ENCODE measurements at regions of chr10 and their contacts with region 1.

Region 1: DNA sequence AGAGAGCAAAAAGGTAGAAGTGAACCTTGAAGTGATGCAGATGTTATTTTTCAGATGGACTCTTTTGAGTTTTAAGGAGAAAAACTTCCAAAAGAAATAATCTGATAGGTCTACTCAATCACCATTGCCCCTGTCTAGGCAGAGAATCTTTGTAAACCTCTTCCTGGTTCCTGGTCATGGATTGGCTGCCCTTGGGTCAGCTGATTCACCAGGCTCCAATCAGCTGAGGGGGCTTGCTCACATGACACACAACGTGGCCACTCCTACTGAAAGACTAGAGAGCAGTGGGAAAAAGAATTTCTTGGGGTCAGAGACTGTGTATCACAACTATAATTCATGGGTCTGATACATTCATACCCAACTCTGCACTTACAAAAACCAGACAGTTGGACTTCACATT is 20.0 kb upstream of the JCAD start:
- DNase-seq: no peak
- H3K4me3 ChIP-seq: no peak overlapping the region
- H3K27ac ChIP-seq: no peak overlapping the region
- H3K4me1 ChIP-seq: no peaks in the 10 kb centered on the region
- H3K27me3 ChIP-seq: peaks cover under 1% of the 10 kb centered on the region
- CTCF ChIP-seq: no peak

Region 2: DNA sequence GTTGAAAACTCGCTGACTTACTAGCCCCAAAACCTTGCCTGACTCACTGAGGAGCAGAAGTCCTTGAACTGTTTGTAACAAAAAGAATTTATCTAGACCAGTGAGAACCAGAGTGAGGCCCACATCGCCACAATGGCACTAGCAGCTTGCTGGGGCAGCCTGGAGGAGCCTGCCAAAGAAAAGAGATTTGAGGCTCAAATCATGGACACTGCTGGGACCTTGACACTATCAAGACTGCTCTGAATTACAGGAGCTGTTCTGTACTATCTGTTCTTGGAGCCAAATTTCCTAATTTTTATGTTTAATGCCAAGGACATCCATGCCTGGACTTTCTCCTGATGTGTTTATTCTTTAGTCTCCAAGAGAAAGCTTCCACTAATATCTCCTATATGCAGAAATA is 62.0 kb after region 1 on chr10:
- CTCF ChIA-PET with region 1: no interaction called
- dilution Hi-C with region 1: loop called (anchors 5 kb)
- in situ Hi-C with region 1: no loop called
- intact Hi-C with region 1: no loop called
- DNase-seq: no peak
- H3K4me3 ChIP-seq: no peak overlapping the region
- H3K27ac ChIP-seq: no peak overlapping the region
- H3K4me1 ChIP-seq: no peaks in the 10 kb centered on the region
- H3K27me3 ChIP-seq: no peaks in the 10 kb centered on the region
- CTCF ChIP-seq: no peak

Region 3: GRCh38 chr10:30231071-30231652 is 151.8 kb after region 1 on chr10:
- CTCF ChIA-PET with region 1: no interaction called
- dilution Hi-C with region 1: no loop called
- in situ Hi-C with region 1: no loop called
- intact Hi-C with region 1: no loop called
- DNase-seq: no peak
- H3K4me3 ChIP-seq: no peak overlapping the region
- H3K27ac ChIP-seq: no peak overlapping the region
- H3K4me1 ChIP-seq: peaks cover 6% of the 10 kb centered on the region
- H3K27me3 ChIP-seq: no peaks in the 10 kb centered on the region
- CTCF ChIP-seq: no peak

Measured in mammary epithelial cell (primary cell).